Naive thymus-derived CD4-positive, alpha-beta T cell (primary cell): ENCODE measurements at regions of chr9 and their contacts with region 1.

Region 1: GRCh38 chr9:34328987-34329832 is at the starts of genes KIF24 and NUDT2:
- DNase-seq: peak; percentile 89 to 99 (median 96)
- ATAC-seq: peak; percentile 95
- H3K4me3 ChIP-seq: peak within 1 kb of the TSS; percentile 98
- H3K4me3 Mint-ChIP-seq: peak within 1 kb of the TSS; percentile 88 to 97 (median 94)
- H3K27ac ChIP-seq: peak within 1 kb of the TSS; percentile 94
- H3K27ac Mint-ChIP-seq: peak within 1 kb of the TSS; percentile 77 to 98 (median 95)
- H3K4me1 ChIP-seq: peaks cover 3 to 8% of the 10 kb centered on the region in 2 donors
- H3K4me1 Mint-ChIP-seq: peaks cover 11 to 45% (median 29%) of the 10 kb centered on the region in 7 donors
- H3K27me3 ChIP-seq: no peaks in the 10 kb centered on the region
- H3K27me3 Mint-ChIP-seq: no peaks in the 10 kb centered on the region
- total RNA-seq, gene KIF24: 0.11 to 6.0 (median 0.35) TPM
- total RNA-seq, gene NUDT2: 7.5 to 30.0 (median 22.7) TPM

Region 2: DNA sequence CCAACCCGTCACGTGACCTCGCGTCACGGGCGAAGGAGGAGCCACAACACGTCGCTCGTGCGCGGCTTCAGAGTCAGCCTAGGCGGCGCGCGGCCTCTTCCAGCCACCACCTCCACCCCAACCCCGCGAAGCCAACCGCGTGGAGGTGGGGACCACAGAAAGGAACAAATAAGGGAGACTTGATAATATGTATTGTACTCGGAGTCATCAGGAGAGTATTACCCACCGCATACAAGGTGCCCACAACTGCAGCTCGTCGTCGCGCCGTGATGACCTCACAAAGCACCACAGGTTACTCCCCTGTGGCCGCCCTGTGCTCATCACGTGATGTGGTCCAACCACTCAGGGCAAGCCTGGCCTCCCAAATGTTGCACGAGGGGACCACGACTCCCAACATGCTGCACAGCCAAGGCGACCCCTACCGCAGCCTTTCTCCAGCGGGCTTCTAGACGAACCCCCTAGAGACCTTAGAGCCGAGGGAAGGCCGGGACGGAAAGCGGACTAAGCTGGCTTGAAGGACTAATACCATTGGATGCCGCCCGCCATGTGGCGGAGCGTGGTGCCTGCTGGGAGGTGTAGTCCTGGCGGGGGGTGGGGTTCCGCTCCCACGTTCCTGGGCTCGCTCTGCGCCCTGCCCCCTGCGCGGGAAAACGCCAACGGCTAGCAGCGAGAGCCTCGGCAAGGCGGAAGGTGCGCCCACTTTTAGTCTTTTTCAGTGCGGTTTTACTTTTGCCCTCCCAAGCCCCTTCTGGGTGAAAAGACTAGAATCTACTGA is 280.1 kb before region 1 on chr9:
- CTCF ChIA-PET with region 1: no interaction called
- POLR2A ChIA-PET with region 1: no interaction called
- intact Hi-C with region 1: loop called in 1 of 2 experiments (anchors 2 kb)
- DNase-seq: peak; percentile 96 to 99 (median 97)
- ATAC-seq: peak; percentile 93
- H3K4me3 ChIP-seq: peak overlapping the region; percentile 98
- H3K4me3 Mint-ChIP-seq: peak overlapping the region; percentile 96 to 100 (median 98)
- H3K27ac ChIP-seq: peak overlapping the region; percentile 86
- H3K27ac Mint-ChIP-seq: peak overlapping the region; percentile 98 to 100 (median 99)
- H3K4me1 ChIP-seq: peaks cover 11 to 22% of the 10 kb centered on the region in 2 donors
- H3K4me1 Mint-ChIP-seq: peaks cover 25 to 55% (median 31%) of the 10 kb centered on the region in 7 donors
- H3K27me3 ChIP-seq: no peaks in the 10 kb centered on the region
- H3K27me3 Mint-ChIP-seq: peaks cover 0 to 4% (median 0%) of the 10 kb centered on the region in 5 donors

Region 3: DNA sequence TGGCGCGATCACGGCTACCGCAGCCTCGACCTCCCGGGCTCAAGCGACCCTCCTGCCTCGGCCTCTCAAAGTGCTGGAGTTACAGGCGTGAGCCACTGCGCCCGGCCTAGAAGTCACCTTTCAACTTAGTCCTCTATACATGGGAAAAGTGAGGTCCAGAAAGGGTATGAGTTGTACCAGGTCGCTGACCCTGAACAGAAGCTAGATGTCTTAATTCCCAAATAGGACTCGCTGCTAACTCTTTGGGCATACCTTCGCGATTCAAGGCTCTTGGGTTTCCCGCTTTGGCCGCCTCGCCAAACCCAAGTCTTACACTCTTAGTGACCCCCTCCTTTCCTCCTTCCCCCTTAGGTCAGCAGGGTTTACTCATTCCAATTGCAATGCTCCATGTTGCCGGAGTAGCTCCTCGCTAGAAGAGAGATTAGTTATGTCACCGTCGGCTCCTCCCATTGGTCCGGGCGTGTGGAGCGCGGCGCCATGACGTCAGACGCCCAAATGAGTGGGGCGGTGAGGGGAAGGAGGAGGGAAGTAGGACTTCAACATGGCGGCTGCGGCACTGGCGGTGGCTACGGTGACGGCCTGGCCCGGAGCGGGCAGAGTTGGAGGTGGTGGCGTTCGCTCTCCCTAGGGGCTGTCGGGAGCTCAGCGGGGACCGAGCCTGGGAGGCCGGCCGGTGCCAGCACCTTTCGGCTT is 150.5 kb before region 1 on chr9 and contains the start of gene UBAP1:
- CTCF ChIA-PET with region 1: no interaction called
- POLR2A ChIA-PET with region 1: interaction called, 3 read pairs
- intact Hi-C with region 1: loop called (anchors 1 kb)
- DNase-seq: peak; percentile 83 to 97 (median 93)
- ATAC-seq: peak; percentile 99
- H3K4me3 ChIP-seq: peak within 1 kb of the TSS; percentile 93
- H3K4me3 Mint-ChIP-seq: peak within 1 kb of the TSS; percentile 93 to 100 (median 96)
- H3K27ac ChIP-seq: peak within 1 kb of the TSS; percentile 97
- H3K27ac Mint-ChIP-seq: peak within 1 kb of the TSS; percentile 94 to 99 (median 98)
- H3K4me1 ChIP-seq: peaks cover 0 to 8% of the 10 kb centered on the region in 2 donors
- H3K4me1 Mint-ChIP-seq: peaks cover 7 to 33% (median 21%) of the 10 kb centered on the region in 7 donors
- H3K27me3 ChIP-seq: no peaks in the 10 kb centered on the region
- H3K27me3 Mint-ChIP-seq: no peaks in the 10 kb centered on the region
- total RNA-seq, gene UBAP1: 31.1 to 39.9 (median 32.8) TPM

Region 4: GRCh38 chr9:34279411-34279810 is 49.8 kb before region 1 on chr9:
- CTCF ChIA-PET with region 1: no interaction called
- POLR2A ChIA-PET with region 1: no interaction called
- intact Hi-C with region 1: no loop called
- DNase-seq: no peak
- ATAC-seq: no peak
- H3K4me3 ChIP-seq: no peak overlapping the region
- H3K4me3 Mint-ChIP-seq: no peak overlapping the region
- H3K27ac ChIP-seq: no peak overlapping the region
- H3K27ac Mint-ChIP-seq: no peak overlapping the region
- H3K4me1 ChIP-seq: no peaks in the 10 kb centered on the region
- H3K4me1 Mint-ChIP-seq: peaks cover 0 to 8% (median 7%) of the 10 kb centered on the region in 7 donors
- H3K27me3 ChIP-seq: no peaks in the 10 kb centered on the region
- H3K27me3 Mint-ChIP-seq: no peaks in the 10 kb centered on the region

Region 5: DNA sequence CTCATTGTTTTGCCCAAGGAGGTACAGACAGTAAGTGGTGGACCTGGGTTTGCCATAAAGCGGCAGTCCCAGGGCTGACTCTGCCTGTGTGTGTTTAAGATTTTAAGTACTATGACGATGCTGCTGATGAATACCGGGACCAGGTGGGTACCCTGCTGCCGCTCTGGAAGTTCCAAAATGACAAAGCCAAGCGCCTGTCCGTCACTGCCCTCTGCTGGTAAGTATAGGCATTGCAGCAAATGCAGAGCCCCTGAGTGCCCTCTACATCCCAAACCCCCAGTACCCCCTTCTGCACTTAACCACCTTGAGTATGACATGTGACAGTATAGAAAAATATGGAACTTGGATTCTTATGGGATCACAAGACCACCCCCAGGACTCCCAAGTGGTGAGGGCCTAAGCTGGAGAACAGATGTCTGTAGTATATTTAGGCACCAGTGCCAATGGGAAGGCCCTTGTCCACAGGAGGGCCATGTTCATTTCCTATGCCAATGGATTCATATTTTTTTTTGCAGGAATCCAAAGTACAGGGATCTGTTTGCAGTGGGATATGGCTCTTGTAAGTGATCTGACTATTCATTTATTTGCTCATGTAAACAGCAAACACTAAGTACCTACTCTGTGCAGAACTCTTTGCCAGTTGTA is 171.5 kb after region 1 on chr9:
- CTCF ChIA-PET with region 1: interaction called, 5 read pairs
- POLR2A ChIA-PET with region 1: interaction called, 3 read pairs
- intact Hi-C with region 1: loop called in 1 of 2 experiments (anchors 1 kb)
- DNase-seq: peak; percentile 38 to 80 (median 61)
- ATAC-seq: peak; percentile 90
- H3K4me3 ChIP-seq: no peak overlapping the region
- H3K4me3 Mint-ChIP-seq: no peak overlapping the region
- H3K27ac ChIP-seq: no peak overlapping the region
- H3K27ac Mint-ChIP-seq: no peak overlapping the region
- H3K4me1 ChIP-seq: no peaks in the 10 kb centered on the region
- H3K4me1 Mint-ChIP-seq: peaks cover 0 to 2% (median 0%) of the 10 kb centered on the region in 7 donors
- H3K27me3 ChIP-seq: no peaks in the 10 kb centered on the region
- H3K27me3 Mint-ChIP-seq: peaks cover 0 to 19% (median 0%) of the 10 kb centered on the region in 5 donors

Region 6: GRCh38 chr9:34591248-34591916 is 262.2 kb after region 1 on chr9:
- CTCF ChIA-PET with region 1: interaction called, 4 read pairs
- POLR2A ChIA-PET with region 1: no interaction called
- intact Hi-C with region 1: loop called (anchors 1 to 5 kb)
- DNase-seq: peak; percentile 48 to 85 (median 70)
- ATAC-seq: peak; percentile 85
- H3K4me3 ChIP-seq: peak overlapping the region; percentile 71
- H3K4me3 Mint-ChIP-seq: peak overlapping the region; percentile 28 to 91 (median 81)
- H3K27ac ChIP-seq: no peak overlapping the region
- H3K27ac Mint-ChIP-seq: no peak overlapping the region
- H3K4me1 ChIP-seq: peaks cover 0 to 13% of the 10 kb centered on the region in 2 donors
- H3K4me1 Mint-ChIP-seq: peaks cover 10 to 31% (median 28%) of the 10 kb centered on the region in 7 donors
- H3K27me3 ChIP-seq: peaks cover 4 to 17% of the 10 kb centered on the region in 2 donors
- H3K27me3 Mint-ChIP-seq: peaks cover 55 to 78% (median 66%) of the 10 kb centered on the region in 5 donors

Region 7: DNA sequence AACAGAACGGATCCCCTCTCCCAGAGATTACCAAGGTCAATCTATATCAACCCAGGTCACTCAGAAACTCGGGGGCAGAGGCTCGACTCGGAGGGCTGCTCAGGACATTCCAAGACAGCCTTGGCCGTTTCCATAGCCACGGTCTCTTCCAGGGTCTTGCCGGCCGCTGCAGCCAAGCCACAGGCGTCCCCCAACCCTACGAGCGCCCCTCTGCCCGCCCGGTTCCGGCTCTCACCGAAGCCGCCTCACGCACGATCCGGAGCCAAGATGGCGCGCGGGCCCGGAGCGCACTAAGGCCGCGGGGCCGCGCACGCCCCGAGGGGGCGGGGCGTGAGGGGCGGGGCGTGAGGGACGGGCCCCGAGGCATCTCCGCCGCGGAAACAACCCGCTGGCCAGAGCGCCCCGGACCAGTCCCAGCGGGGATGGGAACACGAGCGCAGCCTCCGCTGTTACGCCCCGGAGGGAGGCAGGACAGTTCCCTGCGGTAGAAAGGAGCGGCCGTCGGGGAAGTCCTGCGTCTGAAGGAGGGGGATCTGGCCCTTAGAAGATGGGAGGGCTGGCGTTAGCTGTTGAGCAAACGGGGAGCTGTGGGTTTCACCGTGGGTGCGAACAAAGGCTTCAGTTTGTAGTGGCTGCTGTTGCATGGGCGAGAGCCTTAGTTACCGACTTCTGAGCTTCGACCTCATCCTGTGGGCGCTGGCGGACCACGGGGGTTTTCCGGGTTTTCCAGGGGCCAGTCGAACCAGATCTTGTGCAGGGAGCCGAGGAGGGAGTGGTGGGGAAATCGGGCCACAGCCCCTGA is 282.8 kb after region 1 on chr9 and contains the start of gene RPP25L:
- CTCF ChIA-PET with region 1: interaction called, 3 read pairs
- POLR2A ChIA-PET with region 1: no interaction called
- intact Hi-C with region 1: loop called in 1 of 2 experiments (anchors 5 kb)
- DNase-seq: peak; percentile 75 to 94 (median 86)
- ATAC-seq: peak; percentile 96
- H3K4me3 ChIP-seq: peak within 1 kb of the TSS; percentile 89
- H3K4me3 Mint-ChIP-seq: peak within 1 kb of the TSS; percentile 84 to 96 (median 90)
- H3K27ac ChIP-seq: peak within 1 kb of the TSS; percentile 87
- H3K27ac Mint-ChIP-seq: peak within 1 kb of the TSS; percentile 84 to 96 (median 93)
- H3K4me1 ChIP-seq: peaks cover 10 to 17% of the 10 kb centered on the region in 2 donors
- H3K4me1 Mint-ChIP-seq: peaks cover 6 to 28% (median 21%) of the 10 kb centered on the region in 7 donors
- H3K27me3 ChIP-seq: no peaks in the 10 kb centered on the region
- H3K27me3 Mint-ChIP-seq: no peaks in the 10 kb centered on the region
- total RNA-seq, gene RPP25L: 8.8 to 27.3 (median 25.1) TPM

Region 8: GRCh38 chr9:34646211-34647083 is 317.2 kb after region 1 on chr9 and contains the start of gene GALT:
- CTCF ChIA-PET with region 1: no interaction called
- POLR2A ChIA-PET with region 1: no interaction called
- intact Hi-C with region 1: no loop called
- DNase-seq: peak; percentile 82 to 98 (median 93)
- ATAC-seq: peak; percentile 96
- H3K4me3 ChIP-seq: peak within 1 kb of the TSS; percentile 90
- H3K4me3 Mint-ChIP-seq: peak within 1 kb of the TSS; percentile 82 to 96 (median 92)
- H3K27ac ChIP-seq: peak within 1 kb of the TSS; percentile 87
- H3K27ac Mint-ChIP-seq: peak within 1 kb of the TSS; percentile 86 to 94 (median 90)
- H3K4me1 ChIP-seq: peaks cover 20 to 23% of the 10 kb centered on the region in 2 donors
- H3K4me1 Mint-ChIP-seq: peaks cover 18 to 48% (median 34%) of the 10 kb centered on the region in 7 donors
- H3K27me3 ChIP-seq: no peaks in the 10 kb centered on the region
- H3K27me3 Mint-ChIP-seq: no peaks in the 10 kb centered on the region
- total RNA-seq, gene GALT: 126 to 217 (median 162) TPM

Region 9: GRCh38 chr9:36204906-36205547 is 1875.8 kb after region 1 on chr9:
- CTCF ChIA-PET with region 1: no interaction called
- POLR2A ChIA-PET with region 1: no interaction called
- intact Hi-C with region 1: no loop called
- DNase-seq: no peak
- ATAC-seq: no peak
- H3K4me3 ChIP-seq: no peak overlapping the region
- H3K4me3 Mint-ChIP-seq: no peak overlapping the region
- H3K27ac ChIP-seq: no peak overlapping the region
- H3K27ac Mint-ChIP-seq: peak overlapping the region in 2 of 9 donors; percentile 10 to 58
- H3K4me1 ChIP-seq: peaks cover 7 to 8% of the 10 kb centered on the region in 2 donors
- H3K4me1 Mint-ChIP-seq: peaks cover 18 to 56% (median 41%) of the 10 kb centered on the region in 7 donors
- H3K27me3 ChIP-seq: no peaks in the 10 kb centered on the region
- H3K27me3 Mint-ChIP-seq: no peaks in the 10 kb centered on the region